Colonic mucosa (tissue), 4 donors: ENCODE measurements at regions of chr13 and their contacts with region 1.

Region 1: GRCh38 chr13:113405481-113406300 is 41.8 kb upstream of the GRTP1 start:
- DNase-seq: no peak
- H3K4me3 ChIP-seq: no peak overlapping the region
- H3K27ac ChIP-seq: no peak overlapping the region
- H3K4me1 ChIP-seq: no peaks in the 10 kb centered on the region
- H3K27me3 ChIP-seq: no peaks in the 10 kb centered on the region
- CTCF ChIP-seq: no peak

Region 2: GRCh38 chr13:113291949-113292862 is 113.5 kb before region 1 on chr13:
- intact Hi-C with region 1: no loop called
- DNase-seq: peak; percentile 31
- H3K4me3 ChIP-seq: no peak overlapping the region
- H3K27ac ChIP-seq: no peak overlapping the region
- H3K4me1 ChIP-seq: no peaks in the 10 kb centered on the region
- H3K27me3 ChIP-seq: no peaks in the 10 kb centered on the region
- CTCF ChIP-seq: no peak

Region 3: DNA sequence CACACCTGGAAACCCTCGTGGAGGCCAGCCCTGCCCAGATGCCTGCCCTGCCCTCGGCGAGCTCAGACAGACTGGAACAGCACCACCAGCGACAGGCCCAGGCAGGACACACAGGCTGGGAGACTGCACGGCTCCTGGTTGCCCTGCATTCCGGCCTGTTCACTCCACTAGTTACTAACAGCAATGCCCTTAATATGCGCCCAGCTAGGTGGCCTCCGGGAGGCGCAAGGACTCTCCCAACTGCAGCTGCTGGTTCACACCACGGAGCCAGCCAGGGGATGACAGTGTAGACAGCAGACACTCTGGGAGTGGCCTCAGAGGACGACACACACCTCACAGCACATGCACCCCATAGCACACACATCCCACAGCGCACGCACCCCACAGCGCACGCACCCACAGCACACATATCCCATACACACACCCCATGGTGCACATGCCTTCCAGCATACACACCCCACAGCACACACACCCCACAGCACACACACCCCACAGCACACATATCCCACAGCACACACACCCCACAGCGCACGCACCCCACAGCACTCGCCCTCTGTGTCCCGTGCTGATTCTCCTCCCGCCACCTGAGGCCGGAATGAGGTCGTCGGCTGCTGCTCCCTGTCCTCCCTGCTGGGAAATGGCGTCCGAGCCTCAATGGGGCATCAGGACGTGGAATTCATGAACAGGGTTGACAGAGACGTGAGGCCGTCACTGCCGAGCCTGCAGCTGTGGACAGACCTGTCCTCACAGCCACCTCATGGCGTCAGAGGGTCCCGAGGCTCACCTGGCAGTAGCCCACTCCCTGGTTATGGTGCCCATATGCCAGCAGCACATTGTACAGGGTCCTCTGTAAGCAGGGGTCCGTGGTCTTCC is 55.4 kb before region 1 on chr13:
- intact Hi-C with region 1: no loop called
- DNase-seq: no peak
- H3K4me3 ChIP-seq: no peak overlapping the region
- H3K27ac ChIP-seq: no peak overlapping the region
- H3K4me1 ChIP-seq: no peaks in the 10 kb centered on the region
- H3K27me3 ChIP-seq: no peaks in the 10 kb centered on the region
- CTCF ChIP-seq: no peak

Region 4: GRCh38 chr13:113448885-113449692 is 43.4 kb after region 1 on chr13:
- intact Hi-C with region 1: loop called (anchors 5 kb)
- DNase-seq: peak; percentile 85
- H3K4me3 ChIP-seq: peak overlapping the region; percentile 28
- H3K27ac ChIP-seq: peak overlapping the region; percentile 86
- H3K4me1 ChIP-seq: no peaks in the 10 kb centered on the region
- H3K27me3 ChIP-seq: no peaks in the 10 kb centered on the region
- CTCF ChIP-seq: no peak

Region 5: DNA sequence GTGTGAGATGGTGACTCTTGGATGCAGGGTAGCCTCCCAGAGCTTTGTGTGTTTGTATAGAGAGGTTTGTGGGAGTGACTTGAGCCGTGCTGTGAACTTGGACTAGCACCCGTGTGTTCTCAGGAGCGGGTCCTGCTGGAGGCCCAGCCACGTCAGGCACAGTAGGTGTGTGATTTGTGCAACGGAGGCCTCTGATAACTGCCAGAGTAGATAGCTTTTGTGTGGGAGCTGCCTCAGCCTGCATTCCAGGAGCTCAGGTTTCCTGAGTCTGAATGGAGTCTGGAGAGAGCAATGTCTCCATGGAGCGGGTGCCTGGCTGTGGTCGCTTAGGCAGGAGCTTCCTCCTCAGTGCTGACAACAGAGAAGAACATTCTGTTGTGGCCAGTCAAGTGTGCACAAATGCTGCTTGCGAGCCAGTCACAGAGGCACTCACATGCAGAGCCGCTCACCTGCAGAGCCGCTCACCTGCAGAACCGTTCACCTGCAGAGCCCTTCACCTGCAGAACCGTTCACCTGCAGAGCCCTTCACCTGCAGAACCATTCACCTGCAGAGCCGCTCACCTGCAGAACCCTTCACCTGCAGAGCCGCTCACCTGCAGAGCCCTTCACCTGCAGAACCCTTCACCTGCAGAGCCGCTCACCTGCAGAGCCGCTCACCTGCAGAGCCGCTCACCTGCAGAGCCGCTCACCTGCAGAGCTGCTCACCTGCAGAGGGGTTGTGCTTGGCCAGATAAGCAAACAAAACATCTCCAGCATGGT is 211.5 kb after region 1 on chr13:
- intact Hi-C with region 1: no loop called
- DNase-seq: no peak
- H3K4me3 ChIP-seq: no peak overlapping the region
- H3K27ac ChIP-seq: no peak overlapping the region
- H3K4me1 ChIP-seq: no peaks in the 10 kb centered on the region
- H3K27me3 ChIP-seq: no peaks in the 10 kb centered on the region
- CTCF ChIP-seq: no peak

Region 6: GRCh38 chr13:113802145-113802531 is 396.4 kb after region 1 on chr13:
- intact Hi-C with region 1: no loop called
- DNase-seq: peak; percentile 34
- H3K4me3 ChIP-seq: no peak overlapping the region
- H3K27ac ChIP-seq: no peak overlapping the region
- H3K4me1 ChIP-seq: no peaks in the 10 kb centered on the region
- H3K27me3 ChIP-seq: no peaks in the 10 kb centered on the region
- CTCF ChIP-seq: no peak